GM12878 (cell line): ENCODE measurements at regions of chr9 and their contacts with region 1.

Region 1: DNA sequence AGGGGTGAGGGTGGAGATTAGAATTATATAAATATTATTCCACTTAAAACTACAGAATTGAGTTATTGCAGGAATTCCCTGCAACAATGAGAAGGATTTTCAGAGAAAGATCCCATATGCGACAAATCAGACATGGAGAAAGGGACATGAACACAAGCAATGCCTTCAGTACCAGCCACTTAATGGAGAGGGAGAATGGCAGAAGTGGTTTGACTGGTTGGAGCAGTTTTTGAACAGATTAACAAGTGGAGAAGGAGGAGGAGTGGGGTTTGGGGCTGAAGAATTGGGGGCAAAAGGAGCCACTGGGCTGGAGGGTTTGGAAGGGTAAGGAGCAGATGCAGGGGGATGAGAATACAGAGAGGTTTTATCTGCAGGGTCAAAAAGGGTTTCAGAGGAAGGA is 620.9 kb upstream of the PTPRD start:
- DNase-seq: no peak
- ATAC-seq: no peak
- H3K4me3 ChIP-seq: no peak overlapping the region
- H3K27ac ChIP-seq: no peak overlapping the region
- H3K4me1 ChIP-seq: no peaks in the 10 kb centered on the region
- H3K27me3 ChIP-seq: no peaks in the 10 kb centered on the region
- CTCF ChIP-seq: no peak
- EP300 ChIP-seq: no peak
- POLR2A ChIP-seq: no peak
- RAD21 ChIP-seq: no peak

Region 2: DNA sequence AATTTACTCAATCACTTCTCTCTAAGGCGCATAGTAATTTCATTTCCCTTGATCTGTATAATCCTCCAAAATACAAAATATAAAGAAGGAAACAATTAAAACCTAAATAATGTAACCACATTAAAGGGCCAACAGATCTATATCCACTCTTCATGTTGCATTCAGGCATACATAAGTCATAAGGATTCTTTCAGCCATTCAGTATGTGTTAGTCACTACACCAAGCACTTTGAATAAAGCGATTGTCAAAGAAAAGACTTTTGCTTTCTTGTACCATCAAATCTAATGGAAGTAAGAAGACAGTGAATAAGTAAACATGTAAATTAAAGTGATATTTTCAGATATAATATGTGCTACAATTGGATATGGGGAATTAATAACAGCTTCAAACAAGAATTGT is 51.7 kb before region 1 on chr9:
- CTCF ChIA-PET with region 1: no interaction called
- POLR2A ChIA-PET with region 1: no interaction called
- RAD21 ChIA-PET with region 1: no interaction called
- SMC1A ChIA-PET with region 1: no interaction called
- in situ Hi-C with region 1: no loop called
- intact Hi-C with region 1: loop called (anchors 10 kb)
- DNase-seq: no peak
- ATAC-seq: no peak
- H3K4me3 ChIP-seq: no peak overlapping the region
- H3K27ac ChIP-seq: no peak overlapping the region
- H3K4me1 ChIP-seq: no peaks in the 10 kb centered on the region
- H3K27me3 ChIP-seq: no peaks in the 10 kb centered on the region
- CTCF ChIP-seq: no peak
- EP300 ChIP-seq: no peak
- POLR2A ChIP-seq: no peak
- RAD21 ChIP-seq: no peak